Heart left ventricle (tissue), 16 donors: ENCODE measurements at regions of chr5 and their contacts with region 1.

Region 1: GRCh38 chr5:115377468-115378217 is 81.2 kb upstream of the CCDC112 start:
- DNase-seq: no peak
- ATAC-seq: peak; percentile 50 to 73 (median 61)
- H3K4me3 ChIP-seq: no peak overlapping the region
- H3K27ac ChIP-seq: peak overlapping the region in 8 of 12 donors; percentile 11 to 81 (median 44)
- H3K4me1 ChIP-seq: peaks cover 0 to 24% (median 7%) of the 10 kb centered on the region in 12 donors
- H3K27me3 ChIP-seq: no peaks in the 10 kb centered on the region
- CTCF ChIP-seq: peak in 11 of 12 donors; percentile 24 to 64 (median 53)
- POLR2A ChIP-seq: no peak

Region 2: GRCh38 chr5:115194676-115195075 is 183.0 kb before region 1 on chr5:
- intact Hi-C with region 1: no loop called
- DNase-seq: no peak
- ATAC-seq: no peak
- H3K4me3 ChIP-seq: no peak overlapping the region
- H3K27ac ChIP-seq: no peak overlapping the region
- H3K4me1 ChIP-seq: no peaks in the 10 kb centered on the region
- H3K27me3 ChIP-seq: no peaks in the 10 kb centered on the region
- CTCF ChIP-seq: no peak
- POLR2A ChIP-seq: no peak

Region 3: DNA sequence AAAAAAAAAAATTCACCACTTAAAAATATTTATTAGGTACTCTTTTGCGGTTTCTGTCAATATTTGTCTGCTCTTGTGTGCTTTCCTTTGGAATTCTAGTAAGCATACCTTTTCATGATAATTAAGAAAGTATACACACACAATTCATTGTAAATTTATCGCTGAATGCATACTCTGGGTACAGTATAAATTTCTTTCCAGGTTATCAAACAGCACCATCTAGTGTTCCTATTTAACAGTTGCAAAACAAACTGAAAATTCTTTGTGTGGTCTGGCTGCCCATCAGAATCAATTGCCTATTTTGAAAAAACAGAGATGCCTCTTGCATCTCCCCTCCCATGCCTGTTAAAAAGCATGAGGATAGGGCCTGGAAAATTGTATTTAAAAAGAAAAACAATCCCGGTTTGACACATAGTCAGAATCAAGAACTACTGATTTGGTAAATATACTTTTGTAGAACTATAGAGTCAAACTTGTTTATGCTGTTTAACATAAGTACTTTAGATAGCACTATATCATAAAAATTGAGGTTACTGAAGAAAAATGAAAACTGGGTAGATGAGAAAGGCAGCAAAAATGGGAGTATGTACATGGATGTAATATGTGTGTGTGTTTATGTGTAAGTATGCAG is 131.2 kb before region 1 on chr5:
- intact Hi-C with region 1: no loop called
- DNase-seq: no peak
- ATAC-seq: peak in 1 of 4 donors; percentile 55
- H3K4me3 ChIP-seq: no peak overlapping the region
- H3K27ac ChIP-seq: no peak overlapping the region
- H3K4me1 ChIP-seq: peaks cover 0 to 27% (median 11%) of the 10 kb centered on the region in 12 donors
- H3K27me3 ChIP-seq: no peaks in the 10 kb centered on the region
- CTCF ChIP-seq: peak; percentile 59 to 80 (median 68)
- POLR2A ChIP-seq: no peak

Region 4: GRCh38 chr5:115309751-115310370 is 67.8 kb before region 1 on chr5:
- intact Hi-C with region 1: loop called in 7 of 10 experiments (anchors 5 kb)
- DNase-seq: no peak
- ATAC-seq: peak in 2 of 4 donors; percentile 47 to 51
- H3K4me3 ChIP-seq: no peak overlapping the region
- H3K27ac ChIP-seq: no peak overlapping the region
- H3K4me1 ChIP-seq: no peaks in the 10 kb centered on the region
- H3K27me3 ChIP-seq: no peaks in the 10 kb centered on the region
- CTCF ChIP-seq: peak; percentile 67 to 89 (median 74)
- POLR2A ChIP-seq: no peak

Region 5: GRCh38 chr5:115429343-115429940 is 51.8 kb after region 1 on chr5:
- intact Hi-C with region 1: loop called in 1 of 10 experiments (anchors 5 kb)
- DNase-seq: no peak
- ATAC-seq: no peak
- H3K4me3 ChIP-seq: no peak overlapping the region
- H3K27ac ChIP-seq: no peak overlapping the region
- H3K4me1 ChIP-seq: peaks cover 0 to 27% (median 14%) of the 10 kb centered on the region in 12 donors
- H3K27me3 ChIP-seq: no peaks in the 10 kb centered on the region
- CTCF ChIP-seq: no peak
- POLR2A ChIP-seq: no peak

Region 6: DNA sequence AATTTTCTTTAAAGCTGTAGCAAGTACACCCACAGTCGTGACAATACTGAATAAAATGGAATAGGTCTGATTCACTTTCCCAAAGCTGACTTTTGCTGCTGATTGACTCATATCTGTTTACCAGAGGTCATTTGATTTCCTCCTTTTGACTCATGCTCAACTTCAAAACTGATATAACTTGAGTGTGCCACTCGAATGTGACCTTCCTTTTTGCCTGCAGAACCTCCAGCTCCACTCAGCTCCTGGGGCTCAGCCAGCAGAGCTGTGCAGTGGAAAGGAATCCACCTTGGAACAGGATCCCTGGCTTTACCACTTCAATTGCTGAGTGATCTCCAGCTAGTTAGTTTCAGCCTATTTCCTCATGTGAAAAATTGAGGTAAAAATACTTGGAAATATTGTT is 82.8 kb after region 1 on chr5:
- intact Hi-C with region 1: loop called in 2 of 10 experiments (anchors 1 to 10 kb)
- DNase-seq: peak; percentile 78 to 91 (median 80)
- ATAC-seq: peak; percentile 87 to 94 (median 92)
- H3K4me3 ChIP-seq: no peak overlapping the region
- H3K27ac ChIP-seq: peak overlapping the region; percentile 45 to 90 (median 82)
- H3K4me1 ChIP-seq: peaks cover 0 to 62% (median 42%) of the 10 kb centered on the region in 12 donors
- H3K27me3 ChIP-seq: no peaks in the 10 kb centered on the region
- CTCF ChIP-seq: no peak
- POLR2A ChIP-seq: no peak

Region 7: DNA sequence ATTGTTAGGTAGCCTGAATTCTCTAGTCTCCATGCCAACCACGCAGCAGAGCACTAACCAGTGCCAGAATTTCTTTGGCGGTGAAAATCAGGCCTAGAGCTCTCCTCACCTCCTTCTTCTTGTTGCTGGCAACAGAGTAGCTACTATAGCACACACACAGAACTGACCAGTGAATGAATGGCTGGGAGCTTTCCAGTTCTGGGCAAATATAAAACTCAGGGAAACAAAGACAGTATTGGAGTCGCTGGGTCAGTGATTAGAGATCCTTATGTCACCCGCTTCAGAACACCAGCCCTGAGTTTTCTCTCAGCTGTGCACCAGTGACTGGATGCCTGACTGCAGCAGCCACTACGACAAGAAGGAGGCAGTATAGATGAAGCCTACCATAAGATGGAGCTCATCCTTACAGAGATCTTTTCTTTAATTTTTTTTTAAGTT is 193.8 kb after region 1 on chr5:
- intact Hi-C with region 1: loop called in 8 of 10 experiments (anchors 1 to 5 kb)
- DNase-seq: peak in 1 of 5 donors; percentile 37
- ATAC-seq: peak; percentile 82 to 85 (median 83)
- H3K4me3 ChIP-seq: no peak overlapping the region
- H3K27ac ChIP-seq: peak overlapping the region in 2 of 12 donors; percentile 15
- H3K4me1 ChIP-seq: peaks cover 0 to 22% (median 0%) of the 10 kb centered on the region in 12 donors
- H3K27me3 ChIP-seq: no peaks in the 10 kb centered on the region
- CTCF ChIP-seq: peak in 2 of 12 donors; percentile 13 to 21
- POLR2A ChIP-seq: no peak

Region 8: GRCh38 chr5:115586601-115587048 is 209.0 kb after region 1 on chr5:
- intact Hi-C with region 1: loop called in 5 of 10 experiments (anchors 2 to 5 kb)
- DNase-seq: no peak
- ATAC-seq: no peak
- H3K4me3 ChIP-seq: no peak overlapping the region
- H3K27ac ChIP-seq: no peak overlapping the region
- H3K4me1 ChIP-seq: peaks cover 0 to 28% (median 5%) of the 10 kb centered on the region in 12 donors
- H3K27me3 ChIP-seq: no peaks in the 10 kb centered on the region
- CTCF ChIP-seq: peak; percentile 44 to 76 (median 62)
- POLR2A ChIP-seq: no peak

Region 9: DNA sequence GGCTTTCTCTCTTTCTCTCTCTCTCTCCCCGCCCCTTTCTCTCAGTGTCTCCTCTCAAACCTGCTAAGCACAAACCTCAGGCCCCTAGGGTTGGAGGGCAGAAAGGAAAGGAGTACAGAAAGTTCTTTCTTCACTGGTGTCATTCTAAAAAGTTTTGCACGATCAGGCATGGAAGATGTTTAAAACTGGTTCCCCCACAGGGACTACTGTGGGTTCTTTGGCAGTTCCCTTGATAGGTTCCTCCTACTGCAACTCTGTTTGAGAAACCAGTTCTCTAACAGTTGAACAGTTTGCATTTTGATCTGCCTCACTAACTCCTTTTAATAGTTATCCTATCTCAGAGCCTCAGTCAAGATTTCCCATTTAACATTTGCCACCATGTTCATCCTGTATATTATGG is 356.0 kb after region 1 on chr5:
- intact Hi-C with region 1: no loop called
- DNase-seq: no peak
- ATAC-seq: no peak
- H3K4me3 ChIP-seq: no peak overlapping the region
- H3K27ac ChIP-seq: no peak overlapping the region
- H3K4me1 ChIP-seq: no peaks in the 10 kb centered on the region
- H3K27me3 ChIP-seq: peaks cover 0 to 3% (median 0%) of the 10 kb centered on the region in 9 donors
- CTCF ChIP-seq: no peak
- POLR2A ChIP-seq: no peak